H1 (cell line): ENCODE measurements at regions of chr10 and their contacts with region 1.

Region 1: GRCh38 chr10:46544989-46545791 is 11.3 kb downstream of the GPRIN2 start:
- DNase-seq: no peak
- H3K4me3 ChIP-seq: no peak overlapping the region
- H3K27ac ChIP-seq: no peak overlapping the region
- H3K4me1 ChIP-seq: peaks cover 5 to 12% (median 10%) of the 10 kb centered on the region in 4 experiments
- H3K27me3 ChIP-seq: peaks cover 0 to 6% (median 2%) of the 10 kb centered on the region in 4 experiments; a peak in 4 of 7 replicates
- CTCF ChIP-seq: peak in 2 of 3 experiments; percentile 86 to 89; a peak in 3 of 4 replicates
- EP300 ChIP-seq: no peak
- POLR2A ChIP-seq: peak in 1 of 2 experiments; percentile 54; a peak in 2 of 3 replicates
- RAD21 ChIP-seq: peak; percentile 72 to 77

Region 2: DNA sequence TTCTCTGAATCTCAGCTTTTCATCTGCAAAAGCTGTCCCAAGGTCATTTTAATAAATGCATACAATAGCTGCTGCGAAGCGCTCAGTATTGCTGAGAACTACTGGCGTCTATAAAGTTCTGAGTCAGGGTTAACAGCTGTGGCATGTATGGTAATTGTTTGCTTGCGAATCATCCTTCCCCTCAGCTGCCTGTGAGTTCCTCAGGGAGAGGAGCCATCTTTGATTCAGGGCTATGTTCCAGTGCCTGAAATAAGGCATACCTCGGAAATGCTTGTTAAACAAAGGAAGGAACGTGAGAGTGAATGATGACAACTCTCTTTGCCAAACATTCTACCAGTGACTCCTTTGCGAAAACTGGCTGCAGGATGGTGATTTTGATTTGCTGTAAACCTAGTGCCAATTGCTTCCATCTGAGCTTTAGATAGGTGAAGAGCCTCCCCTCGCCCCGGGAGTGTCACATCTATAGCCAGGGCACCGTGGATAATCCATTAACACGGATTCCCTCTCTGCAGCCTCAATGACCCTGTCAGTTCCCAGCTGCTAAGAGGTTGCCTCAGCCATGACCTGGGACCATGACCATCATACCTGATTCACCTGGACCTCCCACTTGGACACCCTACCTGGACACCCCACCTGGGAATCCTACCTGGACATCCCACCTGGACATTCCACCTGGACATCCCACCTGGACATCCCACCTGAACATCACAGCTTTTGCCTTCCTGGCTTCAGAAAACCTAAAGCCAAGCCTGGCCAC is 28.4 kb before region 1 on chr10:
- CTCF ChIA-PET with region 1: interaction called, 29 read pairs
- POLR2A ChIA-PET with region 1: interaction called, 3 read pairs
- DNase-seq: peak in 1 of 2 experiments; percentile 43
- H3K4me3 ChIP-seq: no peak overlapping the region
- H3K27ac ChIP-seq: no peak overlapping the region
- H3K4me1 ChIP-seq: no peaks in the 10 kb centered on the region
- H3K27me3 ChIP-seq: no peaks in the 10 kb centered on the region
- CTCF ChIP-seq: no peak
- EP300 ChIP-seq: no peak
- POLR2A ChIP-seq: no peak
- RAD21 ChIP-seq: no peak

Region 3: GRCh38 chr10:46525177-46525823 is 19.9 kb before region 1 on chr10:
- CTCF ChIA-PET with region 1: interaction called, 32 read pairs
- POLR2A ChIA-PET with region 1: interaction called, 6 read pairs
- DNase-seq: no peak
- H3K4me3 ChIP-seq: no peak overlapping the region
- H3K27ac ChIP-seq: no peak overlapping the region
- H3K4me1 ChIP-seq: peaks cover 0 to 7% (median 0%) of the 10 kb centered on the region in 4 experiments; a peak in 1 of 7 replicates
- H3K27me3 ChIP-seq: 0 out of 7 replicates have a peak, but pooled peaks cover 0 to 3% (median 0%) of the 10 kb centered on the region in 4 experiments
- CTCF ChIP-seq: no peak; a peak in 1 of 4 replicates
- EP300 ChIP-seq: no peak
- POLR2A ChIP-seq: no peak
- RAD21 ChIP-seq: no peak

Region 4: DNA sequence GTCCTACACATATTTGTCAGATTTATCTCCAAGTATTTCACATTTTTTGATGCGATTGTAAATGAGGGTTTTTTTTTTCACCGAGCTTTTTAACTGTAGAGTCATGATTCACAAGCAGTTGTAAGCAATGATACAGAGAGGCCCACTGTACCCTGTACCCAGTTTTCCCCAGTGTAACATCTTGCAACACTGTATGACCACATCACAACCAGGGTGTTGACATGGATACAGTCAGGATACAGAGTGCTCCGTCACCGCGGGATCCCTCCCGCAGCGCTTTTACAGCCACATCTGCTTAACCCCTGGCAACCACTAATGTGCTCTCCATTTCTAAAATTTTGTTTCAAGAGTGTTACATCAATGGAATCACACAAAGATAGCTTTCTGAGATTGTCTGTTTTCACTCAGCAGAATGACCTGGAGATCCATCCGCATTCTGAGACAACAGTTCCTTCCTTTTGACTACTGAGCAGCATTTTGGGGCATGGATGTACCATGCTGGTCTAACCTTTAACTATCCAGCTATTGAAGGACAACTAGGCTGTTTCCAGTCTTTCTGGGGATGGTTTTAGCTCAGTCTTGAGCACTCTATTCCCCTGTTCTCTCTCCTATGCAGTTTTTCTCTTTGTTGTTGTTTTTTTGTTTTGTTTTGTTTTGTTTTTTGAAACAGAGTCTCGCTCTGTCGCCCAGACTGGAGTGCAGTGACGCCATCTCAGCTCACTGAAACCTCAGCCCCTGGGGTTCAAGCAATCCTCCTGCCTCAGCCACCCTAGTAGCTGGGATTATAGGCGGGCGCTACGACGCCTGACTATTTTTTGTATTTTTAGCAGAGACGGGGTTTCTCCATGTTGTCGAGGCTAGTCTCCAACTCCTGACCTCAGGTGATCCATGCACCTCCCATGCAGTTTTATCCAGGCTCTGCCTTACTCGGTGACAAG is 14.7 kb before region 1 on chr10:
- CTCF ChIA-PET with region 1: interaction called, 32 read pairs
- POLR2A ChIA-PET with region 1: interaction called, 6 read pairs
- DNase-seq: no peak
- H3K4me3 ChIP-seq: no peak overlapping the region
- H3K27ac ChIP-seq: no peak overlapping the region
- H3K4me1 ChIP-seq: no peaks in the 10 kb centered on the region
- H3K27me3 ChIP-seq: 0 out of 7 replicates have a peak, but pooled peaks cover 0 to 3% (median 0%) of the 10 kb centered on the region in 4 experiments
- CTCF ChIP-seq: no peak
- EP300 ChIP-seq: no peak
- POLR2A ChIP-seq: no peak
- RAD21 ChIP-seq: no peak

Region 5: GRCh38 chr10:46556515-46557315 is 11.5 kb after region 1 on chr10 and contains the start of gene GPRIN2:
- CTCF ChIA-PET with region 1: interaction called, 65 read pairs
- POLR2A ChIA-PET with region 1: interaction called, 44 read pairs
- DNase-seq: peak; percentile 67 to 96
- H3K4me3 ChIP-seq: peak within 1 kb of the TSS; percentile 73 to 96 (median 82)
- H3K27ac ChIP-seq: no peak within 1 kb of the TSS; the same call in 1 of the 2 replicates
- H3K4me1 ChIP-seq: peaks cover 5 to 19% (median 15%) of the 10 kb centered on the region in 4 experiments
- H3K27me3 ChIP-seq: peaks cover 0 to 18% (median 10%) of the 10 kb centered on the region in 4 experiments; a peak in 4 of 7 replicates
- CTCF ChIP-seq: no peak
- EP300 ChIP-seq: no peak
- POLR2A ChIP-seq: peak in 1 of 2 experiments; percentile 82; a peak in 2 of 3 replicates
- RAD21 ChIP-seq: no peak
- total RNA-seq, gene GPRIN2: 17.8 and 18.6 TPM in 2 replicates